Right cardiac atrium (tissue), 5 donors: ENCODE measurements at regions of chr1 and their contacts with region 1.

Region 1: DNA sequence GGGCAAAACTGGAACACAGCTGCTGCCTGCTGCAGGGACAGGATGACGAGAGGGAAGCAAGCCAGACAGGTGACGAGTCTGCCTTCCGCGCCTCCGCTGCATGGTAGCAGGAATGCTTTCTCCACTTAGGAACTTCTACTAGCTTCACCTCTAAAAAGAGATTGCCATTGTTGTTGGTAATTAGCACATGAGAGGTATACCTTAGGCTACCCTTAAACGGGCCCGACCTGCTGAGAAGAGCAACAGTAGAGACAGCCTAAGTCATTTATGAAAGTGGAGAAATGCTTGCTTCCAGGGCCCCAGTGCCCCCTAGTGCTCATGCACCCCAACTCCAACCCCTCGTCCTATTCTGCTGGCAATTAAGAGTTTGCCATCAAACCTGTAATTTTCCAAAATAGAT is 96.9 kb upstream of the AKT3 start:
- DNase-seq: peak in 1 of 3 donors; percentile 52
- ATAC-seq: peak in 1 of 2 donors; percentile 66
- H3K4me3 ChIP-seq: no peak overlapping the region
- H3K27ac ChIP-seq: no peak overlapping the region
- H3K4me1 ChIP-seq: no peaks in the 10 kb centered on the region
- H3K27me3 ChIP-seq: no peaks in the 10 kb centered on the region

Region 2: DNA sequence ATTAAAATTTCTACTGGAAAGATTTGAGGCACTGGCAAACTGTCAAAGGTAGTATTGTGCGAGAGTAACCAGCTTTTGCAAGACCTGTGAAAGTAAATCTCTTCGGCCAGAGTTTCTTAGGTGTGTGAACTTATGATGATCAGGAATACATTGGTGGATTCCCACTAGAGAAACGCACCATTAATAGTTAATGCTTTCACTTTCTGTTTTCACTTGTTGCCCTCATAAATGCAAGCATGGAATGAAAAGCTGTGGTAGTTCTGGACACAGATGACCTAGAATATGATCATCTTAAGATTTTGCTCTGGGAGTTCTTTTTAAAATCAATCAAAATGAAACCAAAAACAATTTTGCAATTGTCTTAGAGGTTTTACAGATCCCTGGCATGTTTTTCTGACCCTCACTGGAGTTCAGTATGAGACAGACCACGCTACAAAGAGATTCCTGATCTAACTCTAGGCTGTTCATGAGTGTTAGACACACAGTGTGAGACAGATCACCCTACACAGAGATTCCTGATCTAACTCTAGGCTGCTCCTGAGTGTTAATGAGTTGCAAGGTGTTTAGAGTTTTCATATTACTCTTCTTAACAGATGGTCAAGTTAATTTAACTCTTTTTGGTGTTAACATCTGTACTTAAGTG is 592.3 kb before region 1 on chr1:
- intact Hi-C with region 1: loop called in 1 of 4 experiments (anchors 10 kb)
- DNase-seq: no peak
- ATAC-seq: peak; percentile 65 to 68
- H3K4me3 ChIP-seq: peak overlapping the region; percentile 57
- H3K27ac ChIP-seq: no peak overlapping the region
- H3K4me1 ChIP-seq: no peaks in the 10 kb centered on the region
- H3K27me3 ChIP-seq: no peaks in the 10 kb centered on the region

Region 3: GRCh38 chr1:243751506-243751905 is 195.4 kb before region 1 on chr1:
- intact Hi-C with region 1: no loop called
- DNase-seq: no peak
- ATAC-seq: no peak
- H3K4me3 ChIP-seq: no peak overlapping the region
- H3K27ac ChIP-seq: no peak overlapping the region
- H3K4me1 ChIP-seq: no peaks in the 10 kb centered on the region
- H3K27me3 ChIP-seq: no peaks in the 10 kb centered on the region

Region 4: GRCh38 chr1:243831463-243831862 is 115.5 kb before region 1 on chr1:
- intact Hi-C with region 1: no loop called
- DNase-seq: no peak
- ATAC-seq: no peak
- H3K4me3 ChIP-seq: no peak overlapping the region
- H3K27ac ChIP-seq: no peak overlapping the region
- H3K4me1 ChIP-seq: no peaks in the 10 kb centered on the region
- H3K27me3 ChIP-seq: no peaks in the 10 kb centered on the region

Region 5: DNA sequence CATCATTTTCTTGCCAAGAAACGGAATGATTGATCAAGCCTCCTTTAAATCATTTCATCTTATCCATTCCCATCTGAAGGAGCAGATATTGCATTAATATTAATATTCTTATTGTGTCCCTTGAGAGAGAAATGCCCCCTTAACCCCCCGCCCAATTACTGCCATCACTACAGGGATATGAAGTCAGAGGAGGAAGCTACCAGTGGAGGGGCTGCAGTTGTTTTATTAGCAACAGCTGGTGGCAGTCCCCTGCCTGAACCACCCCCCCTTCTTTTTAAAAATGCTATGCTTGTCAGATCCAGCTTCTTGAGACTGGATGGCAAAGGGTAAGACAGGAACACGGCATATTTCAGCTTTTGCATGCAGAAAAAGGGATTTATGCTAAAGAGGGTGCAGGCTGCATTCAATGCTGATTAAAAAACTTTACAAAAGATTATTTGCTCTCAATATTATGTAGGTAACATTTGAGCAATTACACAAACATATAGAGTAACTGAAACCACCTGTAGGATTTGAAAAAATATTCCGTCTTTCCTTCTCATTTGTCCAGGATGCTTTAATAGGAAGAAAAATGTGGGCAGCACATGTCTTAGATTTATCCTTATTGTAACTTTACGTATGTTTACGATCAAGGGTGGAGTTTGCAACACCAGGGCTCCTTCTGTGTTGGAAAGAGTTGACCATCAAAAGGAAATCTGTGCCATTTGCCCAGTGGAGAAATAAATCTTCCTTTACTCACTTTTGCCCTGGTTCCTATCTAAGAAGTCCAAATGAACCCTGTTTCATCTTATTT is 181.8 kb after region 1 on chr1:
- intact Hi-C with region 1: no loop called
- DNase-seq: no peak
- ATAC-seq: no peak
- H3K4me3 ChIP-seq: no peak overlapping the region
- H3K27ac ChIP-seq: no peak overlapping the region
- H3K4me1 ChIP-seq: no peaks in the 10 kb centered on the region
- H3K27me3 ChIP-seq: no peaks in the 10 kb centered on the region